ENCODE measurements at regions of chr14 and their contacts with region 1.

Region 1: DNA sequence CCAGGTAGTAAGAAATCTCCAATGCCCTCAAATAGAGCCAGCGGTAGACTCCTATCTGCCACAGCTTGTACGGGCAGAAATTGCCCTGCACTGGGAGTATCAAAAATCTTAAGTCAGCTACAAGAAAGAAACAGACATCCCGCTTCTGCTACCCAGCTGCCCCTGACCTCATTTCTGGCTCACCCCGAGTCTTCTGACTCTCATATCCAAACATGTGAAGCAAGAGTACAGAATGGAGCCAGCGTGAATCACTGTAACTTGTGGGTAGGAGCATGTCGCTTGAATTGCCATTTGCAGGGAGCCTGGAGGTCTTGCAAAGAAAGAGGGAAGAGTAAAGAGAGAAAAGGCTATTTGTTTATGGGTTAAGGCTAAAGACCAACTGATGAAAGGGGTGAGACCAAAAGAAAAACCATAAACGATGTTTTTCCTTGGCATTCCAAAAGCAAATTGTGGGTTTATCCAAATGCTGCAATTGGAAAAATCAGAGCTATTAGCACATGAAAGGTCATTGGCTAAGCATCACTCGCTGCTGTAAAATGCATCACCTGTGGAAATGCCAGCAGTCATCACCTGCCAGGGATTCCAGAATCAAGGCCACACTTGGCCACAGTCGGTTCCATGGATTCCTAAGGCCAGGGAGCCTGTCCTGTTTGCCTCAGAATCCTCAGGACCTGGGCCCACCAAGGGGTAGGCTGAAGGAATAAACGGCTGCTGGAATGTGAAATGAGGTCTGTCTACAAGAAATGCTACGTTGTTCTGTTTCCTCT is 86.6 kb downstream of the FOXN3 start:
- DNase-seq: no peak
- ATAC-seq: no peak
- H3K4me3 ChIP-seq: no peak overlapping the region
- H3K4me3 Mint-ChIP-seq: no peak overlapping the region
- H3K27ac ChIP-seq: no peak overlapping the region
- H3K27ac Mint-ChIP-seq: no peak overlapping the region
- H3K4me1 ChIP-seq: peaks cover 17% of the 10 kb centered on the region
- H3K4me1 Mint-ChIP-seq: peaks cover 63% of the 10 kb centered on the region
- H3K27me3 ChIP-seq: no peaks in the 10 kb centered on the region
- H3K27me3 Mint-ChIP-seq: no peaks in the 10 kb centered on the region
- CTCF ChIP-seq: no peak

Region 2: GRCh38 chr14:89773644-89774316 is 443.4 kb after region 1 on chr14:
- CTCF ChIA-PET with region 1: no interaction called
- POLR2A ChIA-PET with region 1: no interaction called
- intact Hi-C with region 1: loop called in 1 of 2 experiments (anchors 10 kb)
- DNase-seq: peak; percentile 16 to 78 (median 48)
- ATAC-seq: peak; percentile 87
- H3K4me3 ChIP-seq: peak overlapping the region; percentile 20
- H3K4me3 Mint-ChIP-seq: peak overlapping the region; percentile 62
- H3K27ac ChIP-seq: no peak overlapping the region
- H3K27ac Mint-ChIP-seq: peak overlapping the region; percentile 37
- H3K4me1 ChIP-seq: peaks cover 18% of the 10 kb centered on the region
- H3K4me1 Mint-ChIP-seq: peaks cover 16% of the 10 kb centered on the region
- H3K27me3 ChIP-seq: no peaks in the 10 kb centered on the region
- H3K27me3 Mint-ChIP-seq: no peaks in the 10 kb centered on the region
- CTCF ChIP-seq: no peak

Measured in CD4-positive, alpha-beta T cell (primary cell).